CD8-positive, alpha-beta T cell (primary cell): ENCODE measurements at regions of chr19 and their contacts with region 1.

Region 1: DNA sequence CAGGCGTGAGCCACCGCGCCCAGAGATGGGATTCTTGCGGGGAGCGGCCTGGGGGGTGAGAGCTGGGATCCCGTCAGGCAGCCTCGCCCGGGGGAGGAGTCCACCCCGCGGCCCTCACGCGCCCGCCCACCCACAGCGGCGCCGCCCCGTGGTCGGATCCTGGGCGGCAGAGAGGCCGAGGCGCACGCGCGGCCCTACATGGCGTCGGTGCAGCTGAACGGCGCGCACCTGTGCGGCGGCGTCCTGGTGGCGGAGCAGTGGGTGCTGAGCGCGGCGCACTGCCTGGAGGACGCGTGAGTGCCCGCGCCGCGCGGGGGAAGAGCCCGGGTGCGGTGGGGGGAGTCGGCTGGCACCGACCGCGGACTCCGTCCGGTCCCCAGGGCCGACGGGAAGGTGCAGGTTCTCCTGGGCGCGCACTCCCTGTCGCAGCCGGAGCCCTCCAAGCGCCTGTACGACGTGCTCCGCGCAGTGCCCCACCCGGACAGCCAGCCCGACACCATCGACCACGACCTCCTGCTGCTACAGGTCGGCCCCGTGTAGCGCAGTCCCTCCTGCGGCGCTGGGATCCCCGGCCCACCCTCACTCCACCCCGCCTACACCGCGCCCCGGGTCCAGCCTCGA is 1.1 kb downstream of the CFD start:
- DNase-seq: peak; percentile 38 to 86 (median 63)
- ATAC-seq: peak; percentile 45
- H3K4me3 ChIP-seq: peak overlapping the region; percentile 22 to 46
- H3K4me3 Mint-ChIP-seq: peak overlapping the region; percentile 60
- H3K27ac ChIP-seq: no peak overlapping the region
- H3K27ac Mint-ChIP-seq: no peak overlapping the region
- H3K4me1 ChIP-seq: peaks cover 20% of the 10 kb centered on the region
- H3K4me1 Mint-ChIP-seq: peaks cover 17% of the 10 kb centered on the region
- H3K27me3 ChIP-seq: peaks cover 6 to 9% of the 10 kb centered on the region in 2 experiments
- H3K27me3 Mint-ChIP-seq: peaks cover 9% of the 10 kb centered on the region
- CTCF ChIP-seq: no peak

Region 2: GRCh38 chr19:827783-828321 is 32.7 kb before region 1 on chr19 and contains the start of gene AZU1:
- CTCF ChIA-PET with region 1: no interaction called
- POLR2A ChIA-PET with region 1: no interaction called
- intact Hi-C with region 1: no loop called
- DNase-seq: no peak
- ATAC-seq: no peak
- H3K4me3 ChIP-seq: no peak within 1 kb of the TSS
- H3K4me3 Mint-ChIP-seq: no peak within 1 kb of the TSS
- H3K27ac ChIP-seq: no peak within 1 kb of the TSS
- H3K27ac Mint-ChIP-seq: no peak within 1 kb of the TSS
- H3K4me1 ChIP-seq: no peaks in the 10 kb centered on the region
- H3K4me1 Mint-ChIP-seq: no peaks in the 10 kb centered on the region
- H3K27me3 ChIP-seq: peaks cover 0 to 5% of the 10 kb centered on the region in 2 experiments
- H3K27me3 Mint-ChIP-seq: peaks cover 10% of the 10 kb centered on the region
- CTCF ChIP-seq: no peak
- total RNA-seq, gene AZU1: 0.69 to 0.87 TPM

Region 3: GRCh38 chr19:850221-850978 is 10.2 kb before region 1 on chr19:
- CTCF ChIA-PET with region 1: interaction called, 10 read pairs
- POLR2A ChIA-PET with region 1: no interaction called
- intact Hi-C with region 1: no loop called
- DNase-seq: peak in 1 of 9 experiments; percentile 21
- ATAC-seq: no peak
- H3K4me3 ChIP-seq: no peak overlapping the region
- H3K4me3 Mint-ChIP-seq: no peak overlapping the region
- H3K27ac ChIP-seq: no peak overlapping the region
- H3K27ac Mint-ChIP-seq: no peak overlapping the region
- H3K4me1 ChIP-seq: no peaks in the 10 kb centered on the region
- H3K4me1 Mint-ChIP-seq: no peaks in the 10 kb centered on the region
- H3K27me3 ChIP-seq: peaks cover 0 to 16% of the 10 kb centered on the region in 2 experiments
- H3K27me3 Mint-ChIP-seq: peaks cover 27% of the 10 kb centered on the region
- CTCF ChIP-seq: no peak

Region 4: DNA sequence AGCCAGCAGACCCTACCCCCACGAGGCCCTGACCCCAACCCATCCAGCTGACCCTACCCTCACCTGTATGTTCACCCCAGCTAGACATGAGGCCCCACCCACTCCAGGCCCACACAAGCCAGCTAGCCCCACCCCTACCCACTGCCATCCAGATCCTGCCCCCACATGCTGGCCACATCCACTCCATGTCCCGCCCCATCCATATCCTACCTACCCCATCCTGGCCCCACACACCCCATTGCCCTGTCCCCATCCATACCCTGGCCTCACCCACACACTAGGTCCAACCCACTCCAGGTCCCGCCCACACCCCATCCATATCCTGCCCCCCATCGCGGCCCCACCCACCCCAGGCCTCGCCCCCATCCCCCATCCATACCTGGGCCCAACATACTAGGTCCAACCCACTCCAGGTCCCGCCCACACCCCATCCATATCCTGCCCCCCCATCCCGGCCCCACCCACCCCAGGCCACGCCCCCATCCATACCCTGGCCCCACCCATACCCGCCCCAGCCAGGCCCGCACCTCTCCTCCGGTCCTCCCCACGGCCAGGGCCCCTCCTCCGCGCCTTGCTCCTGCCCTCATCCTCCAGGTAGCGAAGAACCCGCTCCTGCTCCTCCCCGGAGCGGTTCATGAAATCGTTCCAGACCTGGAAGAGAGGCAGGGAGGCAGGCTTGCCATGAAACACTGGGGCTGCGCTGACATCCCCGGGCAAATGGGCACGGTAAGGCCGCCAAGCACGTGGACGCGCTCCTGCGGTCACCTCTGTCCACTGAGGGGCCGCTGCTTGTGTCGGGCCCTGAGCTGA is 39.9 kb after region 1 on chr19:
- CTCF ChIA-PET with region 1: interaction called, 47 read pairs
- POLR2A ChIA-PET with region 1: interaction called, 3 read pairs
- intact Hi-C with region 1: no loop called
- DNase-seq: peak in 4 of 9 experiments; percentile 36 to 66 (median 59)
- ATAC-seq: peak; percentile 72
- H3K4me3 ChIP-seq: no peak overlapping the region
- H3K4me3 Mint-ChIP-seq: no peak overlapping the region
- H3K27ac ChIP-seq: no peak overlapping the region
- H3K27ac Mint-ChIP-seq: no peak overlapping the region
- H3K4me1 ChIP-seq: peaks cover 29% of the 10 kb centered on the region
- H3K4me1 Mint-ChIP-seq: peaks cover 24% of the 10 kb centered on the region
- H3K27me3 ChIP-seq: no peaks in the 10 kb centered on the region
- H3K27me3 Mint-ChIP-seq: no peaks in the 10 kb centered on the region
- CTCF ChIP-seq: no peak

Region 5: GRCh38 chr19:920051-920864 is 59.7 kb after region 1 on chr19:
- CTCF ChIA-PET with region 1: interaction called, 70 read pairs
- POLR2A ChIA-PET with region 1: interaction called, 23 read pairs
- intact Hi-C with region 1: loop called (anchors 1 kb)
- DNase-seq: peak in 8 of 9 experiments; percentile 58 to 84 (median 80)
- ATAC-seq: peak; percentile 48
- H3K4me3 ChIP-seq: peak overlapping the region; percentile 40 to 57
- H3K4me3 Mint-ChIP-seq: peak overlapping the region; percentile 82
- H3K27ac ChIP-seq: peak overlapping the region in 1 of 2 experiments; percentile 21
- H3K27ac Mint-ChIP-seq: peak overlapping the region; percentile 93
- H3K4me1 ChIP-seq: peaks cover 48% of the 10 kb centered on the region
- H3K4me1 Mint-ChIP-seq: peaks cover 25% of the 10 kb centered on the region
- H3K27me3 ChIP-seq: peaks cover 0 to 29% of the 10 kb centered on the region in 2 experiments
- H3K27me3 Mint-ChIP-seq: no peaks in the 10 kb centered on the region
- CTCF ChIP-seq: no peak

Region 6: DNA sequence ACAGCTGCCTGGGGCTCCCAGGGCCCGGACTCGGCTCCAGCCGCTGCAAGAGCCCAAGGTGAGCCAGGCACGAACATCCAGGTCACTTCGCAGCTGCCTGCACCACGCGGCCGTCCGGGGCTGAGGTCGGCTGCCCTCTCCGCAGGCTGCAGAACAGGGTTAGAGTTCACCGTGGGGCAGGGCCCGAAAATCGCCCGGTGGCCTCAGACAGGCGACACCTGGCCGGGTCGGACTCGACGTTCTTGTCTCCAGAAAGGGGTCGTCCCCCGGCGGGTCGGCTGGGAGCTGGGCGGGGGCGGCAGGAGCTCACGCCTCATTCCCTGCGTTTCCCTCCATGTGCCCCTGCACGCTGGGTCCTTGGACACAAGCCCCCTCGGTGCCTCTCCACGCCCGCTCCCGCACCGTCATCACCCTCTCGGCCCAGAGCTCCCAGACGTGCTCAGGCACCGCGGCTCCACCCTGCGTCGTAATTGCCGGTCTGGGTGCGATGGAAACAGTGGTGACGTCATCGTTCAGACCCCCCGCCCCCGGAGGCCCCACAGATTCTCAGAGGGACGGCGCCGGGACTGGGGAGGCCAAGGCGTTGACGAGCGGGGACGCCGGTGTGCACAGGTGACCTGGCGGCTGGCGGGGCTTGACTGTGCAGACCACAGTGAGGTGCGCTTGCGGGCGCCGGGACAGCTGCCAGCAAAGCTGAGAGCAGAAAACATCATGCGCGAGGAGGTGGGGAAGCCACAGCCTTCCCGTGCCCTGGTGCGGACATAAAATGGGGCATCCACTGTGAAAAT is 135.7 kb after region 1 on chr19:
- CTCF ChIA-PET with region 1: interaction called, 4 read pairs
- POLR2A ChIA-PET with region 1: no interaction called
- intact Hi-C with region 1: loop called in 1 of 2 experiments (anchors 5 kb)
- DNase-seq: peak; percentile 44 to 97 (median 84)
- ATAC-seq: peak; percentile 79
- H3K4me3 ChIP-seq: peak overlapping the region; percentile 29 to 36
- H3K4me3 Mint-ChIP-seq: peak overlapping the region; percentile 72
- H3K27ac ChIP-seq: peak overlapping the region; percentile 16 to 27
- H3K27ac Mint-ChIP-seq: peak overlapping the region; percentile 92
- H3K4me1 ChIP-seq: peaks cover 27% of the 10 kb centered on the region
- H3K4me1 Mint-ChIP-seq: peaks cover 13% of the 10 kb centered on the region
- H3K27me3 ChIP-seq: peaks cover 15 to 22% of the 10 kb centered on the region in 2 experiments
- H3K27me3 Mint-ChIP-seq: peaks cover 15% of the 10 kb centered on the region
- CTCF ChIP-seq: no peak